KBM-7 (cell line): ENCODE measurements at regions of chr20 and their contacts with region 1.

Region 1: GRCh38 chr20:57388953-57389694 is 2.1 kb upstream of the RBM38 start:
- DNase-seq: peak; percentile 78

Region 2: GRCh38 chr20:57124800-57125399 is 264.2 kb before region 1 on chr20:
- in situ Hi-C with region 1: no loop called
- DNase-seq: no peak

Region 3: DNA sequence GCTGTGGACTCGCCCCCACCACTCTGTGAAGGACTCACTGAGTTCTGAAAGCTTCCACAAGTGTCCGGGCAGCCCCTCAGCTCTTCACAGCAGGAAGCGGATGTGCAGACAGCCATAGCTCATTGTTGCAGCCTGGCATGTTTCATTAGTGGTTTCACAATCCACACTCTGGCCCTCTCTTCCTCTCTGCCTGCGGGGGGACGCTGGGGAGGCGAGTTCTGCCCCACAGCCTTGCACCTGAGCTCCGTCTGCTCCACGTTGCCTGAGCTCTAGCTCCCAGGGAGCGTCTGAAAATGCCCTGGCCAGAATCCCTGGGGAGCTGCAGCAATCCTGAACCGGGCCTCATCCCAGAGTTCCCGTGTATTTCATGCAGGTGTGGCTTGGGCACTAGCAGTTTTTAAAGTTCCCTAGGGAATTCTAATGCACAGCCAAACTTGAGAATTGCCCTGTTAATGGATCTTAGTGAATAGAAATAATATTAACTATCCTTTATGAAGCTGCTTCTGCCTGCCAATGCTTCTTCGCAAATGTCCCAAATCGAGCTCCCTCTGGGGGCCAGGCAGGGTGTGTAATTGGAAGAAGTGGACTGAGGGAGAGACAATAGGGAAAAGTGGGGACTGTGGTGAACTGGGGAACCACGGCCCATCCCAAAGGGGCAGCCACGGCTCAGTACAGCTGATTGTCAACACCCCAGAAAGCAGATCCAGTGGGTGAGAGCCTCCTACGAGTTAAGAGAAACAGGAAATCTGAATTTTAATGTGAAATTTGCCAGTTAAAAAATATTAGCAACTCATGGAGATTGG is 84.3 kb after region 1 on chr20:
- in situ Hi-C with region 1: loop called (anchors 10 kb)
- DNase-seq: peak; percentile 91